B cell (primary cell): ENCODE measurements at regions of chr19 and their contacts with region 1.

Region 1: DNA sequence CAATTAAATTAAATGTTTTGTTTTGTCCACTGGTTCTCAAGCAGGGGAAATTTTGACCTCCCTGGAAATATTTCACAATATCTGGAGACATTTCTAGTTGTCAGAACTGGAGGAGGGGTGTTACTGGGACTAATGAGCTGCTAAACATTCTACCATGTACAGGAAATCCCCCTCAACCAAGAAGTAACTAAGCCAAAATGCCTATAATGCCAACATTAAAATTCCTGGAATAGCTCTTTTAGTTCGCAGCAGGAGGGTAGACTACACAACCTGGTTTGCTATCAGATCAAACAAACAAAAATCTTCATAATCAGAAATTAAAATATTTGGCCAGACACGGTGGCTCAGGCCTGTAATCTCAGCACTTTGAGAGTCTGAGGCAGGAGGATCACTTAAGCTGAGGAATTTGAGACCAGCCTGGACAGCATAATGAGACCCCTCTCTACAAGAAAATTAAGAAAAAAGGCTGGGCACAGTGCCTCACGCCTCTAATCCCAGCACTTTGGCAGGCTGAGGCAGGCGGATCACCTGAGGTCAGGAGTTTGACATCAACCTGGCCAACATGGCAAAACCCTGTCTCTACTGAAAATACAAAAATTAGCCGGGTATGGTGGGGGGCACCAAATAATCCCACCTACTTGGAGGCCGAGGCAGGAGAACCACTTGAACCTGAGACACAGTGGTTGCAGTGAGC is 13.7 kb upstream of the SMARCA4 start:
- DNase-seq: no peak
- ATAC-seq: no peak
- H3K4me3 ChIP-seq: no peak overlapping the region
- H3K4me3 Mint-ChIP-seq: no peak overlapping the region
- H3K27ac ChIP-seq: no peak overlapping the region
- H3K27ac Mint-ChIP-seq: no peak overlapping the region
- H3K4me1 ChIP-seq: no peaks in the 10 kb centered on the region
- H3K4me1 Mint-ChIP-seq: peaks cover 3% of the 10 kb centered on the region
- H3K27me3 ChIP-seq: no peaks in the 10 kb centered on the region
- H3K27me3 Mint-ChIP-seq: no peaks in the 10 kb centered on the region
- CTCF ChIP-seq: no peak

Region 2: DNA sequence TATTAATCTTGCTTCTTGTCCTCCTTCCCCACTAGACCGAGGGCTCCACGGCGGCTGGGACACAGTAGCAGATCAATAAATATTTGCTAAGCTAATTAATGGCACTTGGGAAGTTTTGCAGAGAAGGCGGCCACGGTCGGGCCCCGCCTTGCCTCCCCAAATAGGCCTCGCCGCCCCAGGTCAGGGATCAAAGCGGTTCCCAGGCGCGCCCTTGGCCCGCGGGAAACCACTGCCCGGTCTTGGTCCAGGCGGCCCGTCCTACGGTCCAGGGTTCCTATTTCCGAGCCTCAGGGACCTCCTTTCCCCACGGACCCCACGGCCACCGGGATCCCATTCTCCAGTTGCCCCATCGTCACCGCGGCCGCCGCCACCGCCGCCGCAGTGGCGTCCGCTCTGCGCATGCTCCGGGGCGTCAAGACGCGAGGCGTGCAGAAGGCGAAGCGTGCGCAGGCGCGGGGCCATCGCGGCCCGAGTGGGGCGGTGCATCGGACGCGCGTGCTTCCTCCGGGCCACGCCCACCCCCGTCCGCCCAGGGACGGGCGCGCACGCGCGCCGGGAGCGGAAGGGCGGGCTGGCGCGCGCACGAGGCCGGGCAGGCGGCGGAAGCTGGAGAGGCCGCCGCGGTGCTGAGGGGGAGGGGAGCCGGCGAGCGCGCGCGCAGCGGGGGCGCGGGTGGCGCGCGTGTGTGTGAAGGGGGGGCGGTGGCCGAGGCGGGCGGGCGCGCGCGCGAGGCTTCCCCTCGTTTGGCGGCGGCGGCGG is 13.4 kb after region 1 on chr19 and contains the start of gene SMARCA4:
- CTCF ChIA-PET with region 1: interaction called, 23 read pairs
- POLR2A ChIA-PET with region 1: interaction called, 3 read pairs
- intact Hi-C with region 1: loop called (anchors 2 kb)
- DNase-seq: peak; percentile 99
- ATAC-seq: peak; percentile 84
- H3K4me3 ChIP-seq: peak within 1 kb of the TSS; percentile 67 to 90 (median 80)
- H3K4me3 Mint-ChIP-seq: peak within 1 kb of the TSS; percentile 93
- H3K27ac ChIP-seq: peak within 1 kb of the TSS; percentile 76 to 84
- H3K27ac Mint-ChIP-seq: peak within 1 kb of the TSS; percentile 96
- H3K4me1 ChIP-seq: peaks cover 22 to 37% of the 10 kb centered on the region in 2 donors
- H3K4me1 Mint-ChIP-seq: peaks cover 40% of the 10 kb centered on the region
- H3K27me3 ChIP-seq: no peaks in the 10 kb centered on the region
- H3K27me3 Mint-ChIP-seq: no peaks in the 10 kb centered on the region
- CTCF ChIP-seq: no peak
- total RNA-seq, gene SMARCA4: 82.3 and 82.7 TPM in 2 replicates